ENCODE measurements at regions of chr1 and their contacts with region 1.

Region 1: DNA sequence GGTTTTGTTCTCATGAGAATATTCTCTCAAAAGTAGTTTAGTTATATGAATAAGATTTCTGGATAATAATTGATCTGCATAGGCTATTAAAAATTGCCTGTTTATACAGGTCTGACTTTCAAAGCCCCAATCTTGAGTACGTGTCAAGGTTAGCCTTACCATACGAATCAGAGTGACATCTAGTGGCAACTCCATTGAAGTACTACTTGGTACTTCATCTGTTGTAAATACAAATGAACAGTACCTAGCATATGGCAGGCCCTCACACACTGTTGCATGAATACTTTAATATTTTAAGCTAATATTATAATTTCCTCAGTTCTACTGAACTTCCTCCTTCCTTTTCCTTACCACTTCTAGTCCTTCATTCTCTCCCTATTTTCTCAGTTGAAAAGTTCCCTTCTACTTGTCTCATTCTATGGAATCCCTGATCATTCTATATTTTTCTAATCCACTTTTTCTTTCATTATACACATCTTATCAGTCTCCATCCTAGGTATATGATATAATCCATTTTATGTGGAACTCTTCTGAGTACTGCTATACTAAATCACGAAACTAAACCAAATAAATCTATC is 101.2 kb downstream of the AKT3 start:
- DNase-seq: peak; percentile 68
- H3K4me3 ChIP-seq: no peak overlapping the region
- H3K27ac ChIP-seq: no peak overlapping the region
- H3K4me1 ChIP-seq: no peaks in the 10 kb centered on the region
- CTCF ChIP-seq: peak; percentile 86

Region 2: DNA sequence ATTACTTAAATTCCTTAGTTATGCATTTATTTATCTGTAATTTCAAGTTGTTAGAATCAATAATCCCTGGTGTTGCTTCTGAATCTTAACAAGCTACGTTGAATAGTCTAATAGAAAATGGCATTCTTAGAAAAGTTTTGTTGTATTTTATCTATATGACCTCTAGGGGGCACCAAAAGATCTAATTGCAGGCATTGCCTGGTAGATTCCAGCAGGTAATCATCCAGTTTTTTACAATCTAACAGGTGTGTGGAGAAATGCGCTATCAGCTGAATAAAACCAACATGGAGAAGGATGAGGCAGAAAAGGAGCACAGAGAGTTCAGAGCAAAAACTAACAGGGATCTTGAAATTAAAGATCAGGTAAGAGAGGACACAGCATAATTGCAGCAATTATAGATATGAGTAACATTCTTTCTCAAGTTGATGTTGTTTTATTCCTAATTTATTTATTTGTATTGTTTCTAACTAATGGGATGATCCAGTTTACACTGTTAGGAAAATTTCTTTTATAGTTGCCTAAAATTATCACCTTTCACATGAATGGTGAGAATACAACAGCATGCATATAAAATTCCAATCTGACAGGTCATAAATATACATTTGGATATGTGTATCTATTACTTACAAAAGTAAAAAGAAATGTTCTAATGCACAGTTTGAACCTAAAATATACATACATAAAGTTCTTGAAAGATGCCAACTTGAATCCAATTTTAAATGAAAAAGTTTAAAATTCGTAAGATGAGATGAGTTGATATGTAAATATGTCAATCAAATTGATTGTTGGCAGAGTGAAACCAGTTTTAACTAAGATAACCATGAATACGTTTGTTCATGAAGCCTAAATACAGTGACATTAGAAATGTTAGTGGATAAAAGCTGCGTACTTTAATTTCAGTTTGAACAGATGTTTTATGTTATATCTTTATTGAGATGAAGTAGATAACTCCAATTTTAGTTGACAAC is 404.5 kb before region 1 on chr1:
- CTCF ChIA-PET with region 1: no interaction called
- POLR2A ChIA-PET with region 1: no interaction called
- intact Hi-C with region 1: loop called (anchors 2 kb)
- DNase-seq: peak; percentile 63
- H3K4me3 ChIP-seq: no peak overlapping the region
- H3K27ac ChIP-seq: no peak overlapping the region
- H3K4me1 ChIP-seq: no peaks in the 10 kb centered on the region
- CTCF ChIP-seq: peak; percentile 91

Region 3: DNA sequence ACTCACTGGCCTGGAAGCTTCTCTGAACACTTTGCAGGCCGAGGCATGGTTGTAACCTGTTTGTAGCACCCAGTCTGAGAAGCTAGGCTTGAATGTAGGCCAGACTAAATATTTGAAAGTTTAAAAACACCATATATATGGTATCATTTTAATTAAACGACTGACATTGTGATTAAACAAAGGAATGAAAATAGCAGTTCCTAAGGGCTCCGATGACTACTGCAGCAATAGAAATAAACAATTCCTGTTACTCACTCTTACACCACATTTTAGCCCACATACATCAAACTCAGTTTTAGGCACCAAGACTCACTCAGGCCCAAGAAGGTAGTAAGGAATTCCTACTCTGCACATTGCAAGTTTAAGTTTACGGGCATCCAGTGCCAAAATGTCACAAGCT is 180.0 kb before region 1 on chr1:
- CTCF ChIA-PET with region 1: no interaction called
- POLR2A ChIA-PET with region 1: no interaction called
- intact Hi-C with region 1: no loop called
- DNase-seq: no peak
- H3K4me3 ChIP-seq: no peak overlapping the region
- H3K27ac ChIP-seq: no peak overlapping the region
- H3K4me1 ChIP-seq: no peaks in the 10 kb centered on the region
- CTCF ChIP-seq: no peak

Region 4: GRCh38 chr1:243667591-243667990 is 81.2 kb before region 1 on chr1:
- CTCF ChIA-PET with region 1: no interaction called
- POLR2A ChIA-PET with region 1: no interaction called
- intact Hi-C with region 1: no loop called
- DNase-seq: no peak
- H3K4me3 ChIP-seq: no peak overlapping the region
- H3K27ac ChIP-seq: no peak overlapping the region
- H3K4me1 ChIP-seq: no peaks in the 10 kb centered on the region
- CTCF ChIP-seq: no peak

Region 5: DNA sequence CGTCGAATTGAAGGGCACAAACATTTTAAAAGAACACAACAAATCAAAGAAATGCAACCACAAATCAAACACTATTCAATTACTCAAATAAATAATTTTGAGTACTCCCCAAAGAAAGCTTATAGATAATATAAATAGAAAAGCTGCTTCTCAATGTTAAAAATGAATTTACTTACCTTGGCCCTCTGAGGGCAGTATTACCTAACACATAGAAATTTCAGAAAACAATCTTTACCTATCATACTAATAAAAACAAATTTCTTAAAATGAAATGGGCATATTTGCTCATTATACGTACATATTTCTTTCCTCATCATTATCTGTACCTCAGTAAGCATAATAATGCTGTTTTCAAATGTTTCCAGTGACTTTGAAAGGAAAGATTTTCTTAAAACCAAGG is 40.6 kb before region 1 on chr1:
- CTCF ChIA-PET with region 1: no interaction called
- POLR2A ChIA-PET with region 1: interaction called, 3 read pairs
- intact Hi-C with region 1: loop called (anchors 2 kb)
- DNase-seq: no peak
- H3K4me3 ChIP-seq: no peak overlapping the region
- H3K27ac ChIP-seq: no peak overlapping the region
- H3K4me1 ChIP-seq: no peaks in the 10 kb centered on the region
- CTCF ChIP-seq: peak; percentile 63

Region 6: DNA sequence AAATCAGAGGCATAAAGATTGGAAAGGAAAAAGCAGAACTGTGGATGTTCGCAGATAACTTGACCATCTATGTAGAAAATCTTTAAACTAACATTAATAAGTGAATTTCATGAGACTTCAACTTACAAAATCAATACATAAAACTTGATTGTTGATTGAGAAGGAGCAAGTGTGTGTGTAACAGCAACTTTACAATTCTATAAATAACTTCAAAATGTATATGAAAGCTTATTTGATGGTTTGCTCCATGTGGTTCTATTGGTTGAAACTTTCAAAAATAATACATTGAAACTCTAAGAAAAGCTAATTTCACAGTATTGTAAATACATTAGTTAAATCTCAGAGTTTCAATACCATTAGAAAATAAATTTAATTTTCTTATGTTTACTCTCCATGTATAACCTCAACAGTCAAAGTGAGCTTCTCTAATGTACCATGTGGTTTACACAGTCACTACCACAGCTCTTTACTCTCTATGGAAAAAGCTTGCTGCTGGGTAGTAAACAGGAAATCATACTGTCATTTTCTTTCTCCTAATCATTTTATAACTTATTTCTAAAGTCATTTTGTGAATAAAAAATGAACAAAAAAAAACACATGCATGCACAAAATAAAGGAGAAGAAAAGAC is 89.2 kb after region 1 on chr1:
- CTCF ChIA-PET with region 1: no interaction called
- POLR2A ChIA-PET with region 1: no interaction called
- intact Hi-C with region 1: no loop called
- DNase-seq: no peak
- H3K4me3 ChIP-seq: no peak overlapping the region
- H3K27ac ChIP-seq: no peak overlapping the region
- H3K4me1 ChIP-seq: no peaks in the 10 kb centered on the region
- CTCF ChIP-seq: no peak

Measured in OCI-LY7 (cell line).